GM10248 (cell line): ENCODE measurements at regions of chr4 and their contacts with region 1.

Region 1: GRCh38 chr4:140252742-140253555 is 99.0 kb upstream of the MAML3 start:
- DNase-seq: peak; percentile 73
- CTCF ChIP-seq: peak; percentile 99

Region 2: GRCh38 chr4:139603576-139604387 is 649.2 kb before region 1 on chr4:
- CTCF ChIA-PET with region 1: interaction called, 17 read pairs
- POLR2A ChIA-PET with region 1: no interaction called
- DNase-seq: peak; percentile 45
- CTCF ChIP-seq: peak; percentile 59

Region 3: GRCh38 chr4:139735381-139736273 is 517.3 kb before region 1 on chr4:
- CTCF ChIA-PET with region 1: interaction called, 10 read pairs
- POLR2A ChIA-PET with region 1: no interaction called
- DNase-seq: no peak
- CTCF ChIP-seq: no peak

Region 4: GRCh38 chr4:140052050-140052449 is 200.9 kb before region 1 on chr4:
- CTCF ChIA-PET with region 1: interaction called, 13 read pairs
- POLR2A ChIA-PET with region 1: no interaction called
- DNase-seq: peak; percentile 18
- CTCF ChIP-seq: peak; percentile 53

Region 5: DNA sequence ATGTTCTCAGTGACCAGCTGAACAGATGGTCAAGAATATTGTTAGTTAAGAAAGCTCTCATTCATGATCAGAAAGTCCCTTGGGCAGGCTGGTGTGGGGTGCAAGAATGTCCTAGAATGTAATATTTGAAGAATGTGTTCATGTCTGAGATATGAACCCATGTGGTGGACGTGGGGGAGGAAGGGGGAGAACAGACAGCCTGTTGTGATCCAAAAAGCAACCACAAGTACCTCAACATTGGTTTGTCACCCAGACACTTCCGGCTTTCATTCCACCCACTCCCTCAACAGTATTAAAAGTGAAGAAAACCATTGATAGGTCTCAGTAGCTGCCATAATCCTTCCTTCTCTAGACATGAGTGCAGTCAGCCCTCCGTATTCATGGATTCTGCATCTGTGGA is 181.1 kb before region 1 on chr4:
- CTCF ChIA-PET with region 1: no interaction called
- POLR2A ChIA-PET with region 1: no interaction called
- DNase-seq: peak; percentile 42
- CTCF ChIP-seq: no peak

Region 6: DNA sequence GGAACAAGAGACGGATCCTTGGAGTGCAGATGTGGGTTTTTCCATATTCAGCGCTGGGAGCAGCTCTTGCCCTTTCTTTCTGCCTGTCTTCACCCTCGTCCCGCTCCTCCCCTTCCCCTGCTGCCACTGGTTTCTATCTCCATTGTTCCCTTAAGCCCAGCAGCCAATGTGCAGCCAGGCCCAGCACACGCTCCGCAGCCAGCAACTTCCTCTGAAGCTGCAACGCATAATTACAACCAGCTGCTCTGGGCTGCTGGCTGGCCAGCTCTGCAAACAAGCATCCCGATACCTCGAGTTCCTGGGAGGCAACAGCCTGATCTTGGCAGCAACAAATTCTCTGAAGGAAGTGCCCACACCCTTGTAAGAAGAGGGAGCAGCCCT is 15.4 kb before region 1 on chr4:
- CTCF ChIA-PET with region 1: interaction called, 45 read pairs
- POLR2A ChIA-PET with region 1: no interaction called
- DNase-seq: no peak
- CTCF ChIP-seq: no peak

Region 7: GRCh38 chr4:140266991-140267426 is 14.1 kb after region 1 on chr4:
- CTCF ChIA-PET with region 1: interaction called, 25 read pairs
- POLR2A ChIA-PET with region 1: no interaction called
- DNase-seq: no peak
- CTCF ChIP-seq: no peak